ENCODE measurements at regions of chr16 and their contacts with region 1.

Region 1: GRCh38 chr16:68310761-68311511 is at the starts of genes PRMT7 and SLC7A6OS:
- DNase-seq: peak; percentile 90
- H3K4me3 Mint-ChIP-seq: peak within 1 kb of the TSS; percentile 97
- H3K27ac Mint-ChIP-seq: peak within 1 kb of the TSS; percentile 87
- H3K4me1 Mint-ChIP-seq: peaks cover 16% of the 10 kb centered on the region
- H3K27me3 Mint-ChIP-seq: no peaks in the 10 kb centered on the region
- CTCF ChIP-seq: no peak
- total RNA-seq, gene PRMT7: 28.0 and 33.2 TPM in 2 replicates
- total RNA-seq, gene SLC7A6OS: 19.4 and 20.4 TPM in 2 replicates

Region 2: DNA sequence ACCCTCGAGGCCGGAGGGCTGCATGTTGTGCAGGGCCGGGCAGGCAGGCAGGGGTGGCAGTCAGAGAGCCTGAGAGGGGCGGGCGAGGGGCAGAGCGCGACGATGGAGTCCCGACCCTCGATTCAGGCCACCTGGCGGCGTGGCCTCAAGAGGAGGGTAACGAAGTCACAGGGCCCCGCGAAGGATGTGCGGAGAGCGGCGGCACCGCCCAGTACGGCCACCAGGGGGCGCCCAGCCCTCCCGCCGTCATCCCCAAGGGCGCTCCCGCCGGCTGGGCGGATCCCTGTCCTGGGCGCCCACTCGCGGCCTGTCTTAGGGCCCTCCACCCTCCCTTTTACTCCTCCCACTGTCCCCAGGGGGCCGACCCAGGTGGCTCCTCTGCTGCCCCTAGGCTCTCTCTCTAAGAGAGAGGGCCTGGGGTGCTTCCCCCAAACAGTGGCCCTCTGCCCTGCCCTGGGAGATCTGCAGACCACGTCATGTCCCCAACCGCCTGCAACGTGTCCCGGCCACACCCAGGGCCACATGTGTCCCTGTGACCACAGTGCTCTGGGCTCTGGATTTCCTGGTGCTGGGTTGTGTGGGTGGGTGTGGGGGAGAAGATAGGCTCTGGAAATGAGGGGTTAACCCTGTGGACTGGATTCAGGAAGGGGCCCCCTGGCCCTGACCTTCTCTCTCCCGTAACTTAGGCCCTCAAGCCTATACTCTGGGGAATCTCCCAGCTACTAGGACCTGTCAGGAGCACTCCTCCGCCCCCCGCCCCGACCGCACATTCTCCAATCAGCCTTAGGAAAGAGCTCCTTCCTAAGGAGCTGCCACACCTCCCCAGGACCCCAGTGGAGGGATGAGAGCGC is 317.5 kb before region 1 on chr16:
- CTCF ChIA-PET with region 1: no interaction called
- POLR2A ChIA-PET with region 1: no interaction called
- intact Hi-C with region 1: no loop called
- DNase-seq: peak; percentile 62
- H3K4me3 Mint-ChIP-seq: peak overlapping the region; percentile 53
- H3K27ac Mint-ChIP-seq: peak overlapping the region; percentile 82
- H3K4me1 Mint-ChIP-seq: no peaks in the 10 kb centered on the region
- H3K27me3 Mint-ChIP-seq: no peaks in the 10 kb centered on the region
- CTCF ChIP-seq: peak; percentile 98

Region 3: GRCh38 chr16:68244903-68245853 is 65.8 kb before region 1 on chr16 and contains the start of gene PLA2G15:
- CTCF ChIA-PET with region 1: interaction called, 3 read pairs
- POLR2A ChIA-PET with region 1: interaction called, 14 read pairs
- intact Hi-C with region 1: no loop called
- DNase-seq: peak; percentile 93
- H3K4me3 Mint-ChIP-seq: peak within 1 kb of the TSS; percentile 83
- H3K27ac Mint-ChIP-seq: peak within 1 kb of the TSS; percentile 16
- H3K4me1 Mint-ChIP-seq: peaks cover 9% of the 10 kb centered on the region
- H3K27me3 Mint-ChIP-seq: no peaks in the 10 kb centered on the region
- CTCF ChIP-seq: no peak
- total RNA-seq, gene PLA2G15: 4.6 and 6.4 TPM in 2 replicates

Region 4: DNA sequence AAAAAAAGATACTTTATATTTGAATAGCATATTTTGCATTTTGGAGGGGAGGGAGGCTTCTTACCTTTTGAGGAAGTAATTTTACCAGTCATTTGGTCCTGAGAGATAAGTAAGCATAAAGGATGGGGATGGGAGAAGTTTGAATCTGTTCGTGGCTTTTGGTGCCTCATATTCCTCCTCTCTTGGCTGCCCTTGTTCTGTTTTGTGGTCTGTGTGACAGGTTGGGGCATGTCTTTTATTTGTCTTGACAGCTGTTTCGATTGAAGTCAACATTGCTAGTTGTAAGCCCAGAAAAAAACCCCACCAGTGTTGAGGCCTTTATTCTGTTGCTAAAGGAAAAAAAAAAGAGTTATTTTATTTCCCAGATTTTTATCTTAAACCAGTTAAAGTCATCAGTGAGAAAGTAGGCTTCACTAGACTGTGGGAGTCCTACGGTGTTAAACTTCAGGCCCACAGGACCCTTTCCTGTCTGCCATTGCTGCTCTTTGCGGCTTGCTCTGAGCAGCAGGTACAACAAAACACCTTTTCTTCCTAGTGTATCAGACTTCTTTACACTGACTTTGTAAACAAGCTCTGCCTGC is 35.2 kb before region 1 on chr16:
- CTCF ChIA-PET with region 1: no interaction called
- POLR2A ChIA-PET with region 1: interaction called, 20 read pairs
- intact Hi-C with region 1: no loop called
- DNase-seq: peak; percentile 71
- H3K4me3 Mint-ChIP-seq: no peak overlapping the region
- H3K27ac Mint-ChIP-seq: peak overlapping the region; percentile 77
- H3K4me1 Mint-ChIP-seq: peaks cover 20% of the 10 kb centered on the region
- H3K27me3 Mint-ChIP-seq: no peaks in the 10 kb centered on the region
- CTCF ChIP-seq: no peak

Region 5: DNA sequence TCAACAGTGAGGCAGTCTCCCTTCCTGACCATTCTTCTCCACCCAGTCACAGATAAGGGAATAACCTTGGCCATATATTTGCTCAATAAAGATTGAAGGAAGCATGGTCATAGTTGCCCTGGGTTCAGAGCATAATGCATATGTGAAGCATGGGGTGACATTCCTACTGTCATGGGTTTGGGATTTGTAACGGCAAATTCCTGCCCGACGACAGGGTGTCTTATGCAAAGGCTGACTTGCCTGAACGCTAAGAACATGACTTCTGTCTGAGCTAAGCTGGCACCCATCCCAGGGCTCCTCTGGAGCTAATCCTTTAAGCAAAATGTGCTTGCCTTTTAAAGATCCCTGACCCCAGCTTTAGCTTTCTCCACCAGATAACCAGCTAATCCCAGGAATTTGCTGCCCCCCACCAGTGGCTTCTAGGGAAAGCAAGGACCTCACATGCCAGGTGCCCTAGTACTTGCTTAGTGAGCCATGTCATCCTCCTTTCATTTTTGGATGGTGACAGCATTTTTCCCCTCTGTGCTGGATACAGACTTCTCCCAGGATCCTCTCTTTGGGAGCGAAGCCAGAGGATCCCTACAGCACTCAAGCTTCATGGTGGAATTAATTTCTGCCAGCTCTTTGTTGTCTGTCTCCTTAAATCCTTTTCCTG is 11.9 kb before region 1 on chr16:
- CTCF ChIA-PET with region 1: interaction called, 5 read pairs
- POLR2A ChIA-PET with region 1: interaction called, 92 read pairs
- intact Hi-C with region 1: no loop called
- DNase-seq: peak; percentile 50
- H3K4me3 Mint-ChIP-seq: no peak overlapping the region
- H3K27ac Mint-ChIP-seq: peak overlapping the region; percentile 39
- H3K4me1 Mint-ChIP-seq: no peaks in the 10 kb centered on the region
- H3K27me3 Mint-ChIP-seq: no peaks in the 10 kb centered on the region
- CTCF ChIP-seq: no peak

Region 6: DNA sequence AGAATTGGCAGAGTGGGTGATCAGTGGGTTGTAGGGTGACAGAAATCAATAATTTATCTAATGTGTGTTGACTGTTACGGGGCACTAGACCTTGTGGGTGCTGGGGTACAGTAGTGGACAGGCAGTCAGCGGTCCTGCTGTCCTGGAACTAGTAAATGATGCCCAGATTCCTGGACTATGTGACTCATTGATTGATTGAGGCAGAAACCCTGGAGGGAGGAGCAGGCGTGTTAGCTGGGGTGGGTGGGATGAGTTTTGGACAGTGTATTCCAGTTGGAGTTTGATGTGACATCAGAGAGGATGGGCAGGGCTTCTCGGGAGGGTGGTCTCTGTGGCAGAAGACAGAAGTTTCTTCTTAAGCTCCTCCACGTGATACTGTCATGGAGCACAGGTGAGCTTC is 24.2 kb after region 1 on chr16:
- CTCF ChIA-PET with region 1: no interaction called
- POLR2A ChIA-PET with region 1: interaction called, 13 read pairs
- intact Hi-C with region 1: no loop called
- DNase-seq: peak; percentile 18
- H3K4me3 Mint-ChIP-seq: no peak overlapping the region
- H3K27ac Mint-ChIP-seq: no peak overlapping the region
- H3K4me1 Mint-ChIP-seq: peaks cover 15% of the 10 kb centered on the region
- H3K27me3 Mint-ChIP-seq: no peaks in the 10 kb centered on the region
- CTCF ChIP-seq: no peak

Measured in MCF 10A (cell line).